ENCODE measurements at regions of chr7 and their contacts with region 1.

Region 1: GRCh38 chr7:11355399-11356005 is 381.8 kb downstream of the PHF14 start:
- H3K4me3 ChIP-seq: no peak overlapping the region
- H3K27ac ChIP-seq: no peak overlapping the region
- H3K4me1 ChIP-seq: no peaks in the 10 kb centered on the region
- CTCF ChIP-seq: no peak

Region 2: DNA sequence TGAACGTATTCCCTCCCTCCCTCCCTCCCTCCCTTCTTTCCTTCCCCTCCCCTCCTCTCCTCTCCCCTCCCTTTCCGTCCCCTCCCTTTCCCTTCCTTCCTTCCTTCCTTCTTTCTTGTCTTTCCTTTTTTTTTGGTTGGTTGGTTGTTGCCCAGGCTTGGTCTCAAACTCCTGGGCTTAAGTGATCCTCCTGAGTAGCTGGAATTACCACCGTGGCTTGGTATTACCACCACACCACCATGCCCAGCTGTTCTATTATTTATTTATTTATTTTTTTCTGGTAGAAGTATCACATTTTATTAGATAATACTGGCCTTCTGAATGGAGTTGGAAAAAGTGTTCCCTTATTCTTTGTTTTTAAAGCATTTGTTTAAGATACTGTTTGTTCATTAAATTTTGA is 285.9 kb before region 1 on chr7:
- CTCF ChIA-PET with region 1: no interaction called
- POLR2A ChIA-PET with region 1: no interaction called
- H3K4me3 ChIP-seq: no peak overlapping the region
- H3K27ac ChIP-seq: no peak overlapping the region
- H3K4me1 ChIP-seq: no peaks in the 10 kb centered on the region
- CTCF ChIP-seq: no peak

Region 3: GRCh38 chr7:11343818-11344413 is 11.6 kb before region 1 on chr7:
- CTCF ChIA-PET with region 1: interaction called, 10 read pairs
- POLR2A ChIA-PET with region 1: no interaction called
- H3K4me3 ChIP-seq: no peak overlapping the region
- H3K27ac ChIP-seq: no peak overlapping the region
- H3K4me1 ChIP-seq: no peaks in the 10 kb centered on the region
- CTCF ChIP-seq: peak; percentile 28; the same call in 1 of the 2 replicates

Measured in HEK293 (cell line).